ENCODE measurements at regions of chr10 and their contacts with region 1.

Region 1: GRCh38 chr10:89217057-89217990 is 10.2 kb upstream of the CH25H start:
- DNase-seq: peak; percentile 69

Region 2: GRCh38 chr10:89001024-89001728 is 216.1 kb before region 1 on chr10:
- in situ Hi-C with region 1: loop called (anchors 25 kb)
- DNase-seq: no peak

Region 3: GRCh38 chr10:89369156-89370105 is 152.1 kb after region 1 on chr10:
- in situ Hi-C with region 1: no loop called
- DNase-seq: peak; percentile 50

Measured in ACHN (cell line).